Activated CD4-positive, alpha-beta memory T cell treated with anti-CD3 and anti-CD28 coated beads for 36 hours (primary cell): ENCODE measurements at regions of chr9 and their contacts with region 1.

Region 1: GRCh38 chr9:88593537-88594185 is 58.7 kb downstream of the NXNL2 start:
- DNase-seq: peak; percentile 49
- H3K4me3 Mint-ChIP-seq: no peak overlapping the region
- H3K27ac Mint-ChIP-seq: no peak overlapping the region
- H3K4me1 Mint-ChIP-seq: peaks cover 2% of the 10 kb centered on the region
- H3K27me3 Mint-ChIP-seq: peaks cover 14% of the 10 kb centered on the region

Region 2: DNA sequence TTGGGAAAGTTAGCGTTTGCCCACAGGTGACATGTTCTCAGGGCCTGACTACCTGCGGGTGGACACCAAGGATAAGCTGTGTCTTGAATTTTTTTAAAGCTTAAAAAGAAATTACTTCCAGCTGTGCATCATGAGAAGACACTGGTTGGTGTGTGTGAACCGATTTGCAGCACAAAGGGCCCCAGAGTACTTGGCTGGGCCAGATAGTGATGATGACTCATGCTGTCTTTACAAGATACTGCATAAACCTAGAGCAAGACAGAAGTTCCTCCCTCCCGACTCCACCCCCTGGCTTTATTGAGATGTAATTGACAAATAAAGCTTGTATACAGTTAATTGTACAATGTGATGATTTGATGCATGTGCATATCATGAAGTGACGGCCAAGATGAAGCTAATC is 154.1 kb after region 1 on chr9:
- CTCF ChIA-PET with region 1: no interaction called
- POLR2A ChIA-PET with region 1: no interaction called
- intact Hi-C with region 1: loop called (anchors 10 kb)
- DNase-seq: no peak
- H3K4me3 Mint-ChIP-seq: no peak overlapping the region
- H3K27ac Mint-ChIP-seq: no peak overlapping the region
- H3K4me1 Mint-ChIP-seq: no peaks in the 10 kb centered on the region
- H3K27me3 Mint-ChIP-seq: peaks cover 15% of the 10 kb centered on the region